CD4-positive, alpha-beta memory T cell (primary cell): ENCODE measurements at regions of chr4 and their contacts with region 1.

Region 1: DNA sequence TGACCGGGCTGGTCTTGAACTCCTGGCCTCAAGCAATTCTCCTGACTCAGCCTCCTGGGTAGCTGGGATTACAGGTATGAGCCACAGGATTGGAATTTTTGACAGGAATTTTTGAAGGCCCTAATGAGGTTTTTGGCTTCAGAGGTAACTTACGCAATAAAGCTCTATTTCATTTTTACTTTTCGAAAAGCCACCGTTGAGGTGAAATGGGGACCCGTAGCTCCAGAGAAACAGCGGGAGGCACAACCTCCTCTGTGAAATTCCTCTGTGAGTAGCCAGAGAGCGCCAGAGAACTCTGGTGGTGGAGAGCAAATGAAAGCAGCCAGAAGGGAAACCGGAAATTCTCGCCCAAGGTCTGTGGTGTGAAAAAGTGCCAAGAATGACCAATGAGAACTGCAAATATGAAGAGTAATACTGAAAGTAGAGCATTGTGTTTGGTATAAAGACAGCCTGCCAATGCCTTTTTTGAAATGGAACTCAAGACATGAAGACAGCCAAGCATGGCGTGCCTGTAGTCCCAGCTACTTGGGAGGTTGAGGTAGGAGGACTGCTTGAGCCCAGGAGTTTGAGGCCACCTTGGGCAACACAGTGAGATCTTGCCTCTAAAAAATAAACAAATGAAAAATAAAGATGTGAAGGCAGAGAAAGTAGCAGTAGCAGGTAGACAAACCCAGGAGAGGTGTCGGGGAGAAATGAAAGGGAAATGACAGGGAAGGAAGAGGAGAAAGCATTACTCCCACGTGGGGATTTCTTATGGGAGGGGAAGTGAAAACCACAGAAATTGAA is 33.0 kb upstream of the TMEM131L start:
- DNase-seq: peak; percentile 72 to 79 (median 77)
- H3K4me3 ChIP-seq: peak overlapping the region; percentile 59
- H3K4me3 Mint-ChIP-seq: peak overlapping the region; percentile 84 to 95 (median 88)
- H3K27ac ChIP-seq: peak overlapping the region; percentile 55
- H3K27ac Mint-ChIP-seq: peak overlapping the region; percentile 87 to 97 (median 94)
- H3K4me1 ChIP-seq: peaks cover 56% of the 10 kb centered on the region
- H3K4me1 Mint-ChIP-seq: peaks cover 36 to 68% (median 50%) of the 10 kb centered on the region in 4 donors
- H3K27me3 ChIP-seq: no peaks in the 10 kb centered on the region
- H3K27me3 Mint-ChIP-seq: no peaks in the 10 kb centered on the region

Region 2: DNA sequence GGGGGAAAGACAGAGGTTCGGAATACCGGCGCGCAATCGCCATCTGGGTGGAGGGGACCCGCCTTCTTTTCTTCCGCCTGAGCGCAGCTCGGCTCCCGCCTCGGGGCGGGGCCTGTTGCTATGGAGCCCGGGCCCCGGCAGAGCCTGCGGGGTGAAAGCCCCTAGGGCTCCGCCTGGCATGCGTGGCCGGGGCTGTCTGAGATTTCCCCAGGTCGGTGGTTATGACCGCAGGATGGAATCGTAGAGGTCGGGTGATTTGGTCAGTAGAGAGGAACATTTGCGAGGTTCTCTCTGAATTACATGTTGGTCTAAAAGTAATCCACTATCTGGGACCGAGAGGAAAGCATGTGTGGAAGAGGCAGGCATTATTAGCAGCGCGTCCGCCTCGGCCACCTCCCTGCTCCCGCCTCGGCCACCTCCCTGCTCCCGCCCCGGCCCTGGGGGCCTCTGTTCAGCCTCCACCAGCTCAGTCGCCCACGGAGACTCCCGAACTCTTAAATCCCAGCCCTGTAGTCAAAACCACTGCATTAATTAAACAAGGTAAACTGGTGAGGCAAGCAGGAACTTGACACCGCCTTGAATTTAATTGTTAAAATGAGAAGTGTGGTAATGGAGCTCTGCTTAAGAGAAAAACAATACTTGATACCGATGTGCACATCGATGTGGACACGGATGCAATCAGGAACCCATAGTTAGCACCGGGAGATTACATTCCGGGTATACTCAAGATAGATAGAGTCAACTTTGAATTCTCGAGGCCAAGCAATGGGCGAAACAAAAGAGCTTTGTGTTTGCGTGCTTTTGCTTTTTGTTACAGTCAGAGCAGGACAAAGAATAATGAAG is 183.7 kb before region 1 on chr4:
- CTCF ChIA-PET with region 1: no interaction called
- POLR2A ChIA-PET with region 1: no interaction called
- intact Hi-C with region 1: loop called (anchors 10 kb)
- DNase-seq: peak; percentile 86 to 90 (median 87)
- H3K4me3 ChIP-seq: peak overlapping the region; percentile 63 to 64
- H3K4me3 Mint-ChIP-seq: peak overlapping the region; percentile 89 to 95 (median 94)
- H3K27ac ChIP-seq: peak overlapping the region; percentile 73
- H3K27ac Mint-ChIP-seq: peak overlapping the region; percentile 89 to 97 (median 97)
- H3K4me1 ChIP-seq: peaks cover 17% of the 10 kb centered on the region
- H3K4me1 Mint-ChIP-seq: peaks cover 17 to 43% (median 31%) of the 10 kb centered on the region in 4 donors
- H3K27me3 ChIP-seq: no peaks in the 10 kb centered on the region
- H3K27me3 Mint-ChIP-seq: peaks cover 0 to 2% of the 10 kb centered on the region in 2 donors

Region 3: DNA sequence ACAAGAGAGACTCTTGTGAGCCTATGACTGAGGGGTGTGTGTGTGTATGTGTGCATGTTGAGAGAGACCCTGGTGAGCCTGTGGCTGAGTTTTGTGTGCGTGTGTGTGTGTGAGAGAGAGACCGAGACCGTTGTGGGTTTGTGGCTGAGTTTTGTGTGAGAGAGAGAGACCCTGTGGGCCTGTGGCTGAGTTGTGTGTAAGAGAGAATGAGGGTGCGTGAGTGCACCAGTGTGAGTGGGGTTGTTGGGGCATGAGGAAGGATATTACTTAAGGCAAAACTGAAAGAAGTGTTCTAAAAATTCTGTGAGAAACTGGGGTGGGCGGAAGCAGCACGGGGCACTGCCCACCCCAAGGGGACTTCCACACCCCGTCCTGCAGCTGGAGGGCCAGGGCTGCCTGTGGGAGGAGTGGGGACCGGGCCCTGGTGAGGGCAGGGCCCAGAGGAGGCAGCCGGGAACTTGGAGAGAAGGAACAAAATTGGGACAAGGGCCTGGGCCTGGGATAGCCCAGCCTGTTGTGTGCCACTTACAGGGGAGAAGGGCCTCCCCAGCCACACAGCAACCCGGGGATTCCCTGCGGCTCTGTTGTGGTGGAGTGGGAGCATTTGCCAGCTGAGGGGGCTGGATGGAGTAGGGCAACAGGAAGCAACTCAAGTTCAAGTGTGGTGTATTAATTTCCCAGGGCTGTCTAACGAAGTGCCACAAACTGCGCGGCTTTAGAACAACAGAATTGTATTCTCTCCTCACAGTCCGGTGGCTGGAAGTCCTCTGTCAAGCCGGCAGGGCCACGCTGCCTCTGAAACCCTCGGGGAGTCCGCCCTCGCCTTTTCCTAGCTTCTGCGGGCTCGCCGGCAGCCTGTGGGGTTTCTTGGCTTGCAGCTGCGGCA is 55.1 kb after region 1 on chr4:
- CTCF ChIA-PET with region 1: interaction called, 9 read pairs
- POLR2A ChIA-PET with region 1: interaction called, 6 read pairs
- intact Hi-C with region 1: loop called (anchors 1 kb)
- DNase-seq: peak; percentile 81 to 94 (median 82)
- H3K4me3 ChIP-seq: peak overlapping the region; percentile 25 to 54
- H3K4me3 Mint-ChIP-seq: peak overlapping the region; percentile 78 to 92 (median 88)
- H3K27ac ChIP-seq: peak overlapping the region; percentile 88
- H3K27ac Mint-ChIP-seq: peak overlapping the region; percentile 94 to 99 (median 96)
- H3K4me1 ChIP-seq: peaks cover 90% of the 10 kb centered on the region
- H3K4me1 Mint-ChIP-seq: peaks cover 64 to 87% (median 73%) of the 10 kb centered on the region in 4 donors
- H3K27me3 ChIP-seq: no peaks in the 10 kb centered on the region
- H3K27me3 Mint-ChIP-seq: peaks cover 0 to 2% of the 10 kb centered on the region in 2 donors

Region 4: DNA sequence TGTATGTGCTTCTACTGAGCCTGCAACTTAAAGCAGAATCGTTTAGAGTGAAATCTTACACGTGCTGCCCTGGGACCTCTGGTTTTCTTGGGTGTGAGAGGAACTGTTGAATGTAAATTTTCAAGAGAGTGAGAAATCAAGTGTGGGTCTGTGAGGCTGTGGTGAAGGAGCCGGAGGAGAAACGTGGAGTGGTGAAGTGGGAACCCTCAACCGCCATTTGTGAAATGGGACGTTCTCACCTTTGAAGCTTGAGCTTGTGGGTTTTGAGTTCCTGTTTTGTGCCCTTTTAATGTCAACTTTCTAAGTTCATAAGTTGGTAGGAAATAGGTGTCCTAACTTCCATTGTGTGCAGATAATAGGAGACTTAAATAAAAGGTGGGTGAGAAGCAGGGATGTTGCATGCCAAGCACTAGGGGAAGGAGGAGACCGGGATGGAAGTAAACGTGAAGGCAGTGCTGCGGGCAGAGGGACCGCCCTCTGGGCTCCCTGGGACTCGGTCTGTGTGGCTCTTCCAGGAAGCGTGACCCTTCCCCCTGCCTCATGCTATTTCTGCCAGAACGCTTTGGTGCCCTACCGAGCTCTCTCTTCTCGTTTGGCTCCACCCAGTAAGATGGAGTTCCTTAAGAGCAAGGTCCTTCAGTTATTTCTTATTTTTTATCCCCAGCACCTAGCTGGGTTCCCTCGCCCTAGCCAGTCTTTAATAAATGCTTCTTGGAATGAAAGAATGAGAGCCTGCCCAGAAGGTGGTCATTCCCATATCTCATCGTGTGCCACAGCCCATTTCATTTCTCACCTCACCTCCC is 89.0 kb after region 1 on chr4:
- CTCF ChIA-PET with region 1: interaction called, 12 read pairs
- POLR2A ChIA-PET with region 1: interaction called, 3 read pairs
- intact Hi-C with region 1: loop called (anchors 1 kb)
- DNase-seq: peak; percentile 74 to 78 (median 75)
- H3K4me3 ChIP-seq: peak overlapping the region in 1 of 2 donors; percentile 41
- H3K4me3 Mint-ChIP-seq: peak overlapping the region; percentile 73 to 87 (median 84)
- H3K27ac ChIP-seq: peak overlapping the region; percentile 67
- H3K27ac Mint-ChIP-seq: peak overlapping the region; percentile 69 to 96 (median 92)
- H3K4me1 ChIP-seq: peaks cover 98% of the 10 kb centered on the region
- H3K4me1 Mint-ChIP-seq: peaks cover 78 to 97% (median 89%) of the 10 kb centered on the region in 4 donors
- H3K27me3 ChIP-seq: no peaks in the 10 kb centered on the region
- H3K27me3 Mint-ChIP-seq: no peaks in the 10 kb centered on the region

Region 5: GRCh38 chr4:153541456-153542096 is 108.4 kb after region 1 on chr4:
- CTCF ChIA-PET with region 1: interaction called, 23 read pairs
- POLR2A ChIA-PET with region 1: interaction called, 6 read pairs
- intact Hi-C with region 1: no loop called
- DNase-seq: no peak
- H3K4me3 ChIP-seq: no peak overlapping the region
- H3K4me3 Mint-ChIP-seq: peak overlapping the region in 7 of 8 donors; percentile 17 to 77 (median 41)
- H3K27ac ChIP-seq: no peak overlapping the region
- H3K27ac Mint-ChIP-seq: peak overlapping the region; percentile 33 to 87 (median 75)
- H3K4me1 ChIP-seq: peaks cover 78% of the 10 kb centered on the region
- H3K4me1 Mint-ChIP-seq: peaks cover 51 to 87% (median 74%) of the 10 kb centered on the region in 4 donors
- H3K27me3 ChIP-seq: no peaks in the 10 kb centered on the region
- H3K27me3 Mint-ChIP-seq: no peaks in the 10 kb centered on the region

Region 6: DNA sequence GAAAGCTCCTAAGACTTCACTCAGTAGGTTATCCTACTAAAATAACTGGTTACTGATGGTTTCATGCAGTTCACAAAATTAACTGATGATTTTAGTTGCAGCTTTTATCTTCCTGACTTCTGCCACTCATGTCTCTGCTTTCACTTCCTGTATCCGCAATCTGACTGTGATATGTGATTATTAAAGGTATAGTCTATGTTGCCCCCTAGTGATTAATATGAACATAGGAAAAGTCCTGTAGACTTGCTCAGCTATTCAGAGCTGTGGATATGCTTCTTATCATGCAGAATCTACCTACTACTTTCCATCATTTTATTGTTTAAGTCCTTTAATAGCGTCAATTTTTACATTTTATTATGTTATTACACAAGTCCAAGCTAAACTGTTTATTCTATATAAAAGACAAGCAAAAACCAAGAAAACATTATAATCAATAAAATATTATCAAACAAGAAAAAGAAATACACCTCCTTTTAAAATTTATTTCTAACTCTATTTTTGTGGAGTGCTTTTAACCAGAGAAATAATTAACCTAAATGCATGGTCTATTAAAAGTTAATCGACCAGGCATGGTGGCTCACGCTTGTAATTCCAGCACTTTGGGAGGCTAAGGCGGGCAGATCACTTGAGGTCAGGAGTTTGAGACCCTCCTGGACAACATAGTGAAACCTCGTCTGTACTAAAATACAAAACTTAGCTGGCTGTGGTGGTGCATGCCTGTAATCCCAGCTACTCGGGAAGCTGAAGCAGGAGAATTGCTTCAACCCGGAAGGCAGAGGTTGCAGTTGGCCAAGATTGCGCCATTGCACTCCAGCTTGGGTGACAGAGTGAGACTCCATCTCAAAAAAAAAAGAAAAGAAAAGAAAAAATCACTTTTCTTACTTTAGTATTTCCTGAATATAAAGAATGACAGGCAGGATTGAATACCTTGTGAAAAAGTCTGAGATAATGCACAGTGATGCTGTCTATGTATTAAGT is 210.5 kb after region 1 on chr4:
- CTCF ChIA-PET with region 1: interaction called, 8 read pairs
- POLR2A ChIA-PET with region 1: interaction called, 4 read pairs
- intact Hi-C with region 1: loop called (anchors 2 kb)
- DNase-seq: peak in 4 of 5 donors; percentile 54 to 65 (median 62)
- H3K4me3 ChIP-seq: no peak overlapping the region
- H3K4me3 Mint-ChIP-seq: peak overlapping the region in 3 of 8 donors; percentile 8 to 62 (median 35)
- H3K27ac ChIP-seq: no peak overlapping the region
- H3K27ac Mint-ChIP-seq: peak overlapping the region in 3 of 7 donors; percentile 19 to 93 (median 46)
- H3K4me1 ChIP-seq: peaks cover 6% of the 10 kb centered on the region
- H3K4me1 Mint-ChIP-seq: peaks cover 7 to 15% (median 10%) of the 10 kb centered on the region in 4 donors
- H3K27me3 ChIP-seq: no peaks in the 10 kb centered on the region
- H3K27me3 Mint-ChIP-seq: no peaks in the 10 kb centered on the region

Region 7: DNA sequence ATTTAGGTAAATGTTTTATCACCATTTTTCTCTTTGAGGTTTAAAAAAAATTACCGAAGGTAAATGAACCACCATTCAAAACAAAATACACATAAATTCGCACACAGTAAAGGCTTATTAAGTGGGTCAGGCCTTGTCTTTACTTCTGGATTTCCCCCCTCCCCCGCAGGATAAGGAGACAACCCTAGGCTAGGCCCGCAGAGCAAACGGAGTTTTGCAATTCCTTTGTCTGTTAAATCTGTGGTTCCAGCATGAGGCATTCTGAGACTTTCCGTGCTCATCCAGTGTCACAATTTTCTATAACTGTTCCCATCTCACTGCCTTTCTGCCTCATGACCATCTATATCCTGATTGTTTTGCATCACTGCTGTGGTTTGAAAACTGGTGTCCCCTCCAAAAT is 751.1 kb after region 1 on chr4:
- CTCF ChIA-PET with region 1: no interaction called
- POLR2A ChIA-PET with region 1: no interaction called
- intact Hi-C with region 1: no loop called
- DNase-seq: no peak
- H3K4me3 ChIP-seq: no peak overlapping the region
- H3K4me3 Mint-ChIP-seq: no peak overlapping the region
- H3K27ac ChIP-seq: no peak overlapping the region
- H3K27ac Mint-ChIP-seq: no peak overlapping the region
- H3K4me1 ChIP-seq: no peaks in the 10 kb centered on the region
- H3K4me1 Mint-ChIP-seq: no peaks in the 10 kb centered on the region
- H3K27me3 ChIP-seq: no peaks in the 10 kb centered on the region
- H3K27me3 Mint-ChIP-seq: no peaks in the 10 kb centered on the region